Left ventricle myocardium inferior (tissue), 1 donor: ENCODE measurements at regions of chr9 and their contacts with region 1.

Region 1: GRCh38 chr9:30774326-30774725 is 1610.1 kb upstream of the ACO1 start:
- DNase-seq: no peak
- H3K4me3 ChIP-seq: no peak overlapping the region
- H3K27ac ChIP-seq: no peak overlapping the region
- H3K4me1 ChIP-seq: no peaks in the 10 kb centered on the region
- H3K27me3 ChIP-seq: no peaks in the 10 kb centered on the region
- CTCF ChIP-seq: no peak

Region 2: GRCh38 chr9:30713243-30713642 is 61.1 kb before region 1 on chr9:
- intact Hi-C with region 1: loop called (anchors 10 kb)
- DNase-seq: no peak
- H3K4me3 ChIP-seq: no peak overlapping the region
- H3K27ac ChIP-seq: no peak overlapping the region
- H3K4me1 ChIP-seq: no peaks in the 10 kb centered on the region
- H3K27me3 ChIP-seq: no peaks in the 10 kb centered on the region
- CTCF ChIP-seq: no peak